ENCODE measurements at regions of chr2 and their contacts with region 1.

Region 1: GRCh38 chr2:203014456-203015199 is at the start of gene NBEAL1:
- DNase-seq: peak; percentile 95 to 98 (median 95)
- H3K4me3 ChIP-seq: peak within 1 kb of the TSS; percentile 87 to 93
- H3K4me3 Mint-ChIP-seq: peak within 1 kb of the TSS; percentile 86 to 98 (median 94)
- H3K27ac ChIP-seq: peak within 1 kb of the TSS; percentile 85
- H3K27ac Mint-ChIP-seq: peak within 1 kb of the TSS; percentile 88 to 99 (median 97)
- H3K4me1 ChIP-seq: peaks cover 32% of the 10 kb centered on the region
- H3K4me1 Mint-ChIP-seq: peaks cover 28 to 47% (median 34%) of the 10 kb centered on the region in 4 donors
- H3K27me3 ChIP-seq: no peaks in the 10 kb centered on the region
- H3K27me3 Mint-ChIP-seq: peaks cover 0 to 1% of the 10 kb centered on the region in 2 donors
- total RNA-seq, gene NBEAL1: 15.1 to 15.9 TPM

Region 2: GRCh38 chr2:202375609-202376408 is 638.8 kb before region 1 on chr2 and contains the start of gene BMPR2:
- CTCF ChIA-PET with region 1: no interaction called
- POLR2A ChIA-PET with region 1: no interaction called
- intact Hi-C with region 1: loop called (anchors 1 kb)
- DNase-seq: peak; percentile 73 to 88 (median 81)
- H3K4me3 ChIP-seq: peak within 1 kb of the TSS; percentile 91 to 98
- H3K4me3 Mint-ChIP-seq: peak within 1 kb of the TSS; percentile 96 to 99 (median 99)
- H3K27ac ChIP-seq: peak within 1 kb of the TSS; percentile 76
- H3K27ac Mint-ChIP-seq: peak within 1 kb of the TSS; percentile 91 to 98 (median 95)
- H3K4me1 ChIP-seq: peaks cover 30% of the 10 kb centered on the region
- H3K4me1 Mint-ChIP-seq: peaks cover 21 to 43% (median 23%) of the 10 kb centered on the region in 4 donors
- H3K27me3 ChIP-seq: no peaks in the 10 kb centered on the region
- H3K27me3 Mint-ChIP-seq: no peaks in the 10 kb centered on the region
- total RNA-seq, gene BMPR2: 18.8 to 20.8 TPM

Region 3: DNA sequence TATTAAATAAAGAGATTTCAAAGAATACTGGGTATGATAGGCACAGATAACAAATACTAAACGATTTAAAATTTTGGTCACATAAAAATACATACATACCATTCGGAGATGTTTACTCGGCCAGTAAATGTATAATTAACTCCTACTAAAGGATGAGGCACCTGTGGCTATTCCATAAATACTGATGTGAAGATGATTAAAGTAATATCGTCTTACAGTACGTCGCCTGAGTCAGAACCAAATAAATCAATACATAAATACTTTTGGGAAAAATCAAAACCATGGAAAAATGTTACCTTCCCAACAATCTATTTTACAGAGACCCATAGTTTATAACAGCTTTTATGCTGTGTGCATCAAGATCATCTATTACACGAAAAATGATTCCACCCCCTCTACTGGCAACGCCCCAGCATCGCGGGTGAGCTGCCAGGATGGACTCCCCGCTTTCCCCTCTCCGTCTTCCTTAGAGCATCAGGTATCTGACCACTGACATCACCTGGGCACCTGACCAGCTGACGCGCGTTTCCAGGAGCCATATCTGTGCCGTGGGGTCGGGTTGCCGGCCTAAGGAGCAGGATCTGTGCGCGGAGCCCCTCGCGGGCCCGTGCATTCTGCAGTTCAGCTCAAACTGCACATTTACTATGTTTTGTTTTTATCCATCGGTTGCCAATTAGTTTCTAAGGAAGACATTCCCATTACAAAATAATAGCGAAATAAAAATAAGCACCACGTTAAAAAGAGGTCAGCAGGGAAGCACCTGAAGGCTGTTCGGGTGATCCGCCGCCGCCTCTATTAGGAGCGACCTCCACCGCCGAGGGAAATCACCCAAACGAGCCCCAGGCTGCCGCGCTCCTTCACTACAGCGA is 144.0 kb before region 1 on chr2:
- CTCF ChIA-PET with region 1: no interaction called
- POLR2A ChIA-PET with region 1: interaction called, 5 read pairs
- intact Hi-C with region 1: loop called (anchors 10 kb)
- DNase-seq: peak; percentile 44 to 57 (median 51)
- H3K4me3 ChIP-seq: peak overlapping the region; percentile 59 to 62
- H3K4me3 Mint-ChIP-seq: peak overlapping the region; percentile 87 to 97 (median 94)
- H3K27ac ChIP-seq: peak overlapping the region; percentile 51
- H3K27ac Mint-ChIP-seq: peak overlapping the region in 6 of 7 donors; percentile 18 to 71 (median 59)
- H3K4me1 ChIP-seq: peaks cover 3% of the 10 kb centered on the region
- H3K4me1 Mint-ChIP-seq: peaks cover 5 to 13% (median 9%) of the 10 kb centered on the region in 4 donors
- H3K27me3 ChIP-seq: no peaks in the 10 kb centered on the region
- H3K27me3 Mint-ChIP-seq: no peaks in the 10 kb centered on the region

Region 4: DNA sequence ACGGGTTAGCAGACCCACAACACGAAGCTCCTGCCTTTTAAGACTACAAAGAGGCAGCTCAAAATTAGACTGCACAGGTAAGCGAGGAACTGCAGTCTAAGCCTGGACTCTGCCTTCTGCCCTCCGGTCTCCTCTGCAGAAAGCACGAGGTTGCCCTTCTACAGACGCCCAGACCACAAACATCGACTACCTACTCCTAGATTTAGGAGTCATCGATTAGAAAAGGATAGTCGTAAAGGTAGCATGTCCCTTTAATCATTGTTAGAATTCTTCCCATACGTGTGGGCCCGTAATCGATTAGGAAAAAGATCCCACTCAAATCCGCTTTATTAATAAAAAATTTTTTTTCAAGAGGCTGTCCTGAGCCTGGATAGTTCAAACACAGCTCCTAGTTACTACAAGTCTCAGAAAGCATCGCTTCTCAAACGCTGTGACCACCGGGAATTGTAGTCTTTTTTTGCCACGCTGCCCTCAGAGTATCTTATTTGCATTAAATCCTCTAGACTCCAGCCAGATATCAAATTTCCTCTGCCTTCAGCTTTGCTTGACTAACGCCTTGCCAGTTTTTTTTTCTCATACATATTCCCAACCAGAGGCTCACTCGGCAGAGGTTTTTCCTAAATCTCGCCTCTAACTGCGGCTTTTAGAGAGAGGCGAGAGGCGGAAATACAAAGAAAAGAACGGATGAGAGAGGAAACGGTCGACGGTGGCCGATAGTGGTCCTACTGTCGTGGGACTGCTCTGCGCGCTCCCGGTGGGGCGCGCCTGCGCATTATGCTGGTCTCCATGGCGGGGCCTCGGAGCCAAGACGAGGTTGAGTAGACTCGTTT is 102.9 kb before region 1 on chr2 and contains the starts of genes CARF and WDR12:
- CTCF ChIA-PET with region 1: no interaction called
- POLR2A ChIA-PET with region 1: interaction called, 6 read pairs
- intact Hi-C with region 1: loop called (anchors 1 kb)
- DNase-seq: peak; percentile 92
- H3K4me3 ChIP-seq: peak within 1 kb of the TSS; percentile 94 to 96
- H3K4me3 Mint-ChIP-seq: peak within 1 kb of the TSS; percentile 92 to 99 (median 98)
- H3K27ac ChIP-seq: peak within 1 kb of the TSS; percentile 74
- H3K27ac Mint-ChIP-seq: peak within 1 kb of the TSS; percentile 93 to 99 (median 98)
- H3K4me1 ChIP-seq: peaks cover 15% of the 10 kb centered on the region
- H3K4me1 Mint-ChIP-seq: peaks cover 16 to 48% (median 32%) of the 10 kb centered on the region in 4 donors
- H3K27me3 ChIP-seq: no peaks in the 10 kb centered on the region
- H3K27me3 Mint-ChIP-seq: no peaks in the 10 kb centered on the region
- total RNA-seq, gene CARF: 24.4 to 27.6 TPM
- total RNA-seq, gene WDR12: 21.3 to 25.0 TPM

Region 5: DNA sequence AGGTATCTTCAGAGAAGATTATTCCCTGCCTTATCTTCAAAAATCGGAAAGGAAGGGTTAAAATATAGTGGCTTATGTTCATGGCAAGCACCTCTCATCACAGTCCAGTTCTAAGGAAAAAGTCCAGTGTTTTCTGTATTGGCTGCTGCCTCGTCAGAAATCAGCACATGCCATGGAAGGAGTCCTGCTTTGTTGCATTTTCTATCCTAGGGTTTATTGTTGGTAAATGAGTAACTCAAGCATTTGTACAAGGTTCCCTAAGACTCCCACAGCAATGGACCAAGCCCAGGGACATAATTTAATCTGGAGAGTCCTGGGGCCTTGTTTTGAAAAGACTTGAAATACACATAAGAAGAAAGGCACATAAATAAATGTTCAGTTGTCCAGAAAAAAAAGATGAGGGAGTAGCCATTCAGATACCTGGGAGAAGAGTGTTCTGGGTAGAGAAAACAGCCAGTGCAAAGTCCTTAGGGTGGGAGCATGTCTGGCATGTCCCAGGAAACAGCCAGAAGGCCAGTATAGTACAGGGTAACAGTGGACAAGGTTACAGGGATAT is 26.4 kb after region 1 on chr2:
- CTCF ChIA-PET with region 1: no interaction called
- POLR2A ChIA-PET with region 1: no interaction called
- intact Hi-C with region 1: no loop called
- DNase-seq: no peak
- H3K4me3 ChIP-seq: no peak overlapping the region
- H3K4me3 Mint-ChIP-seq: no peak overlapping the region
- H3K27ac ChIP-seq: no peak overlapping the region
- H3K27ac Mint-ChIP-seq: no peak overlapping the region
- H3K4me1 ChIP-seq: no peaks in the 10 kb centered on the region
- H3K4me1 Mint-ChIP-seq: peaks cover 0 to 5% (median 0%) of the 10 kb centered on the region in 4 donors
- H3K27me3 ChIP-seq: no peaks in the 10 kb centered on the region
- H3K27me3 Mint-ChIP-seq: no peaks in the 10 kb centered on the region

Region 6: GRCh38 chr2:203706403-203706802 is 691.8 kb after region 1 on chr2 and contains the start of gene CD28:
- CTCF ChIA-PET with region 1: no interaction called
- POLR2A ChIA-PET with region 1: no interaction called
- intact Hi-C with region 1: no loop called
- DNase-seq: peak; percentile 94 to 96 (median 94)
- H3K4me3 ChIP-seq: peak within 1 kb of the TSS; percentile 78 to 90
- H3K4me3 Mint-ChIP-seq: peak within 1 kb of the TSS; percentile 86 to 99 (median 92)
- H3K27ac ChIP-seq: peak within 1 kb of the TSS; percentile 94
- H3K27ac Mint-ChIP-seq: peak within 1 kb of the TSS; percentile 93 to 100 (median 99)
- H3K4me1 ChIP-seq: peaks cover 44% of the 10 kb centered on the region
- H3K4me1 Mint-ChIP-seq: peaks cover 42 to 75% (median 55%) of the 10 kb centered on the region in 4 donors
- H3K27me3 ChIP-seq: no peaks in the 10 kb centered on the region
- H3K27me3 Mint-ChIP-seq: no peaks in the 10 kb centered on the region
- total RNA-seq, gene CD28: 203 to 222 TPM

Measured in CD4-positive, alpha-beta memory T cell (primary cell).